ENCODE measurements at regions of chr13 and their contacts with region 1.

Region 1: GRCh38 chr13:97109841-97110492 is 112.2 kb upstream of the MBNL2 start:
- DNase-seq: no peak
- H3K4me3 ChIP-seq: no peak overlapping the region
- H3K27ac ChIP-seq: no peak overlapping the region
- H3K27me3 ChIP-seq: no peaks in the 10 kb centered on the region
- CTCF ChIP-seq: peak; percentile 89

Region 2: DNA sequence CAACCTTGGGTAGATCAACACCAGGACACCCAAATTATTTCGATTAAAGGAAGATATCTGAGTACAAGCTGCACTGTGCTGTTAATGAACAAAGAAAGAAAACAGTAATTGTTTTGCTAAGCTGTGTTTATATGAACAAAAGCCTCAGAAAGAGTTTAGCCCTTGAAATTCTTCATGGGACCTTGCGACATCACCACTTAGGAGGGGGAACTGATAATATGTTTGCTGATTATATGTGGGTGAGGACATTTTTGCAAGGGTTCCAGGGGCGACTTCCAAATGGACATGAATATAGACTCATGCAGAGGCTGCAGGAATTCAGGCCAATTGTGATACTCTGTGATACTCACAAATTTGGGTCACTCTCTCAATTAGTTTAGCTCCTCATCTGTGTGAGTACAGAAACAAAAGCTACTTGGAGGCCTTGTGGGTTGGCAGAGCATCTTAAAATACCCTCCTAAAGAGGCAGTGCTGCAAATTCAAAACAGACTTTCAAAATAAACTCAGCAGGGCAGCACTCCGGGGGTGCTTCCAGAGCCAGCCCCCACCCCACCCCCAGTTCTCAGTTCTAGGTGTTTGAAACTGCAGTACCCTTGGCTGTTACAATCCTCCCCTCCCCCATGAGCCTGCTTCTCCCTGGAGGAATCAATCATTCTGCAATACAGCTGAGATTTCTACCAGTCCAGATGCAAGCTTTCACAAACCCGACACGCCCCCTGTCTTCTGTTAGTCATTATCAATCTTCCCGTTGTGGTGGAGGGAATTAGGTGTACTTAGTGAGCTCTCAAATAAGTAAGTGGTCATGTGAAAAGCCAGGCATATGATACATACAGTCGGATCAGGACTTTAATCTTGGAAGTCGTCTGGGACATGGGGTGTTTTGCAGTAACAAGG is 15.2 kb after region 1 on chr13:
- CTCF ChIA-PET with region 1: interaction called, 24 read pairs
- POLR2A ChIA-PET with region 1: interaction called, 4 read pairs
- DNase-seq: no peak
- H3K4me3 ChIP-seq: no peak overlapping the region; the same call in 1 of the 2 replicates
- H3K27ac ChIP-seq: peak overlapping the region; percentile 41
- H3K27me3 ChIP-seq: no peaks in the 10 kb centered on the region
- CTCF ChIP-seq: no peak

Region 3: DNA sequence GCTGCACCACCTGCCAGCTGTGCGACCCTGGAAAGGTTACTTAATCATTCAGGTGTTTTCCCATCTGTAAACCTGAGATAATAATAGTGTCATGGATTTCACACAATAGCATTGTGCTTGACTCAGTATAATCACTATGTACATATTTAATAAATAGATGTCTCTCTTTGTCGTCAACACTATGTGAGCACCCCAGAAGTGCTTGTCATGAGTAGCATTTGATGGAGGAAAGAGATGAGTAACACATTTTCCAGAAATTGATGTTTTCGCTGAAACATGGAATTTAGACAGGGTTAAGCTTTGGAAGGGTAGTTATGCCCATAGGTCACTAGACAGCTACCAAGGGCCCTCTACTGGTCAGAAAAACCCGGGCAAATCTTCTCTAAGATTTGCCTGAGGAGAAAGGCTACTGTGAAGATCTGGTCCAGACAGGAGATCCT is 102.7 kb after region 1 on chr13:
- CTCF ChIA-PET with region 1: interaction called, 114 read pairs
- POLR2A ChIA-PET with region 1: interaction called, 3 read pairs
- DNase-seq: no peak
- H3K4me3 ChIP-seq: no peak overlapping the region
- H3K27ac ChIP-seq: no peak overlapping the region
- H3K27me3 ChIP-seq: no peaks in the 10 kb centered on the region
- CTCF ChIP-seq: peak; percentile 77

Region 4: GRCh38 chr13:97268772-97269171 is 158.8 kb after region 1 on chr13:
- CTCF ChIA-PET with region 1: interaction called, 19 read pairs
- POLR2A ChIA-PET with region 1: no interaction called
- DNase-seq: no peak
- H3K4me3 ChIP-seq: no peak overlapping the region
- H3K27ac ChIP-seq: no peak overlapping the region
- H3K27me3 ChIP-seq: no peaks in the 10 kb centered on the region
- CTCF ChIP-seq: peak; percentile 26; the same call in 1 of the 2 replicates

Region 5: GRCh38 chr13:97328222-97328790 is 218.3 kb after region 1 on chr13:
- CTCF ChIA-PET with region 1: interaction called, 12 read pairs
- POLR2A ChIA-PET with region 1: no interaction called
- DNase-seq: peak; percentile 58
- H3K4me3 ChIP-seq: no peak overlapping the region
- H3K27ac ChIP-seq: peak overlapping the region; percentile 92
- H3K27me3 ChIP-seq: no peaks in the 10 kb centered on the region
- CTCF ChIP-seq: no peak

Region 6: GRCh38 chr13:97359181-97360057 is 249.5 kb after region 1 on chr13:
- CTCF ChIA-PET with region 1: interaction called, 84 read pairs
- POLR2A ChIA-PET with region 1: interaction called, 4 read pairs
- DNase-seq: peak; percentile 87
- H3K4me3 ChIP-seq: no peak overlapping the region
- H3K27ac ChIP-seq: no peak overlapping the region
- H3K27me3 ChIP-seq: no peaks in the 10 kb centered on the region
- CTCF ChIP-seq: peak; percentile 93